ENCODE measurements at regions of chr1 and their contacts with region 1.

Region 1: DNA sequence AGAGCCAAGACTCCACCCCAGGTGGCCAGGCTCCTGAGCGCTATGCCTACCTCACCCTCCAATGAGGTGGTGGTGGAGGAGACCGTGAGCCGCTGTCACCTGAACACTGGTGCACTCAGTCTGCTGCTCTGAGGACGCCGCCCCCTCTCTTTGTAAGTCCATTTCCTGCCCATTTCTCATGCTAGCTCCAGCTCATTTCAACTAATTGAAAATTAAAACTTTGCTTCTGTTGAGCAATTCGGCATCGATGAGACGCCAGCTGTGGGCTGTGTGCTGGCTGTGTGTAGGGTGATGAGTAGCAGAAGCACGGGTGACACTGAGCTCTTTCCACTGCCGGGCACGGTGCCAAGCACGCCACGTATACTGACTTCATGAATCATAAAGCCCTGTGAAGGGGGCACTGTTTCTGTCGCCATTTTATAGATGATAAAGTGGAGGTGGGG is 11.2 kb downstream of the TNFRSF1B start:
- DNase-seq: peak; percentile 84
- H3K4me3 Mint-ChIP-seq: peak overlapping the region; percentile 63
- H3K27ac Mint-ChIP-seq: peak overlapping the region; percentile 92
- H3K4me1 Mint-ChIP-seq: peaks cover 86% of the 10 kb centered on the region
- H3K27me3 Mint-ChIP-seq: no peaks in the 10 kb centered on the region

Region 2: DNA sequence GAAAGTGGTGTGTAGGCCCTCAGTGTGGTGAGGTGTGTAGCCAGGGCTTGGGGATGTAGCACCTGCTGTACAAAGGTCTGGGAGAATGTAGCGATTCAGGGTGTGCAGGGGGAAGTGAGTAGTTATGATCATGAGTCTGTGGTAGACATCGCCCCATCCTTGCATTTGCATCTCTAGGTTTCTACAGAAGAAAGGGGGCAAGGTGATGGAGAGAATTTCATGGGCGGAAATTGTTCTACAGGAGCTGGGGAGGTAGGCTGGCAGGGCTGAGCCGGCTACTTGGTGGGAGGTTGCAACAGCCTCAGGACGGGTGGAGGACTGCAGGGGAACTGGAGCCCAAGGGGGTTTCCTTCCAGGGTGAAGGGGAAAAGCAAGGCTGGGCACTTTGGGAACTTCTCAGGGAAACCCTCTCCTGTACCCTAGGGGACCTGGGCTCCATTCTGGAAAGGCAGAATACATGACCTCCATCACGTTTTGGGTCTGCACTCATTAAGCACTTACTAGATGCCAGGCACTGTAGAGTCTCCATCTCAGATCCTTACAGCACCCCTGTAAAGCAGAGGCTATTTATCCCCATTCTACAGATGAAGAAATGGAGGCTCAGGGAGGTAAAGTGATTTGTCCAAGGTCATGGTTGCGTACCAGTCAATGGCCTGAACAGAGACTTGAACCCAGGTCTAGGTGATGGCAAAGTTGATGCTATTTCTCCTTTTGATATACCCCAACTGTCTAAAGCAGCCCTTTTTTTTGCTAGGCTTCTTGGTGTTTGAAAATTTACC is 25.7 kb before region 1 on chr1:
- CTCF ChIA-PET with region 1: interaction called, 16 read pairs
- POLR2A ChIA-PET with region 1: interaction called, 5 read pairs
- DNase-seq: no peak
- H3K4me3 Mint-ChIP-seq: no peak overlapping the region
- H3K27ac Mint-ChIP-seq: peak overlapping the region; percentile 99
- H3K4me1 Mint-ChIP-seq: peaks cover 88% of the 10 kb centered on the region
- H3K27me3 Mint-ChIP-seq: no peaks in the 10 kb centered on the region

Region 3: GRCh38 chr1:12161662-12162458 is 16.2 kb before region 1 on chr1:
- CTCF ChIA-PET with region 1: interaction called, 14 read pairs
- POLR2A ChIA-PET with region 1: no interaction called
- DNase-seq: peak; percentile 81
- H3K4me3 Mint-ChIP-seq: peak overlapping the region; percentile 18
- H3K27ac Mint-ChIP-seq: peak overlapping the region; percentile 95
- H3K4me1 Mint-ChIP-seq: peaks cover 84% of the 10 kb centered on the region
- H3K27me3 Mint-ChIP-seq: no peaks in the 10 kb centered on the region

Region 4: DNA sequence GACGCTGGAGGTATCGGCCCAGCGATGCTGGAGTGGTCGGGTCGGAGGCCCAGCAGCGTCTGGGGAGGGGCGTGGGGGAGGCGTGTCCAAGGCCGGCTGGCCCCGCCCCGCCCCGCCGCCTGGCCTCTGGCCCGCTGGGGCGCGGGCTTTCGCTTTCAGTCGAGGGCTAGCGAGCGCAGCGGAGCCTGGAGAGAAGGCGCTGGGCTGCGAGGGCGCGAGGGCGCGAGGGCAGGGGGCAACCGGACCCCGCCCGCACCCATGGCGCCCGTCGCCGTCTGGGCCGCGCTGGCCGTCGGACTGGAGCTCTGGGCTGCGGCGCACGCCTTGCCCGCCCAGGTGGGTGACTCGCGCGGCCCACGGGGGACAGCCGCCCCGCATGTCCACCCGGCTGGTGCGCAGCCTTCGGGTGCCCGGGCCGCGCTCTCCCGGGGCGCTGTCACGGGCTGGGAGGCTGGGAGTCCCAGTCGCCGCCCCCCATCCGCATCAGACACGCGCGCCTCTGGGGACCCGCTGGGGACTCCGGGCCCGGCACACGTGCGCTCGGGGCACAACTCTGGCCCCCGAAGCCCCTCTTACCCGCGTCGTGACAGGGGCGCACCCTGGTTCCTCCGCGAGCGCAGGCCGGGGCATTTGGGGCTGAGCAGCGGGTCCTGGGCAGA is 11.1 kb before region 1 on chr1 and contains the start of gene TNFRSF1B:
- CTCF ChIA-PET with region 1: interaction called, 15 read pairs
- POLR2A ChIA-PET with region 1: no interaction called
- DNase-seq: peak; percentile 70
- H3K4me3 Mint-ChIP-seq: peak within 1 kb of the TSS; percentile 99
- H3K27ac Mint-ChIP-seq: peak within 1 kb of the TSS; percentile 95
- H3K4me1 Mint-ChIP-seq: peaks cover 79% of the 10 kb centered on the region
- H3K27me3 Mint-ChIP-seq: no peaks in the 10 kb centered on the region
- total RNA-seq, gene TNFRSF1B: 167 to 190 TPM